ENCODE measurements at regions of chr12 and their contacts with region 1.

Region 1: GRCh38 chr12:6039894-6040568 is 84.4 kb downstream of the VWF start:
- DNase-seq: peak in 1 of 2 experiments; percentile 69
- H3K4me3 ChIP-seq: no peak overlapping the region
- H3K27ac ChIP-seq: no peak overlapping the region
- H3K4me1 ChIP-seq: peaks cover 0 to 4% (median 2%) of the 10 kb centered on the region in 4 experiments; a peak in 4 of 7 replicates
- H3K27me3 ChIP-seq: peaks cover 0 to 2% (median 0%) of the 10 kb centered on the region in 4 experiments; a peak in 2 of 7 replicates
- CTCF ChIP-seq: peak; percentile 72 to 94 (median 85)
- EP300 ChIP-seq: no peak
- POLR2A ChIP-seq: no peak
- RAD21 ChIP-seq: peak; percentile 97 to 98

Region 2: GRCh38 chr12:5898876-5899275 is 141.2 kb before region 1 on chr12:
- CTCF ChIA-PET with region 1: interaction called, 13 read pairs
- POLR2A ChIA-PET with region 1: no interaction called
- DNase-seq: peak in 1 of 2 experiments; percentile 10
- H3K4me3 ChIP-seq: no peak overlapping the region
- H3K27ac ChIP-seq: no peak overlapping the region
- H3K4me1 ChIP-seq: no peaks in the 10 kb centered on the region
- H3K27me3 ChIP-seq: no peaks in the 10 kb centered on the region
- CTCF ChIP-seq: peak; percentile 60 to 73 (median 65)
- EP300 ChIP-seq: no peak
- POLR2A ChIP-seq: no peak
- RAD21 ChIP-seq: peak; percentile 59 to 76

Region 3: DNA sequence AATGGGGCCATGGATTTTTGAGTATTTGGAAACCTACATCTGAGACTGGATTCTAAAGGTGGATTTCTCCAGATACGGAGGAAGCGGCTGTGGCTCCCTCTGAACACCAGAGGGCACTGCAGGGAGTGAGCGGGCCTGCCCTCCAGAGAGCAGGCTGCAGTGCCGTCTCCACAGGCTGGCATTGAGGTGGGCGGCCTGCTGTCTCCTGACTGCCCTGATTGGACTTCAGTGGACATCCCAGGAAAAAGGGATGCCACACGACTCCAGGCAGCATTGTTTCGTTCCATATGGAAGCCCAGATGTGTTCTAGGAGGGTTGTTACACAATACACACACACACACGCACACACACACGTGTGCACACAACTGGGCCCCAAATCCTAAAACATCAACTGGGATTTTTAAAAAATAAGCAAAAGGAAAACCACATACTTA is 74.1 kb before region 1 on chr12:
- CTCF ChIA-PET with region 1: interaction called, 36 read pairs
- POLR2A ChIA-PET with region 1: no interaction called
- DNase-seq: peak in 1 of 2 experiments; percentile 81
- H3K4me3 ChIP-seq: no peak overlapping the region
- H3K27ac ChIP-seq: no peak overlapping the region
- H3K4me1 ChIP-seq: peaks cover 5 to 14% (median 12%) of the 10 kb centered on the region in 4 experiments; a peak in 6 of 7 replicates
- H3K27me3 ChIP-seq: 0 out of 7 replicates have a peak, but pooled peaks cover 0 to 3% (median 0%) of the 10 kb centered on the region in 4 experiments
- CTCF ChIP-seq: peak; percentile 84 to 90 (median 88)
- EP300 ChIP-seq: no peak
- POLR2A ChIP-seq: no peak
- RAD21 ChIP-seq: peak; percentile 51 to 63

Region 4: DNA sequence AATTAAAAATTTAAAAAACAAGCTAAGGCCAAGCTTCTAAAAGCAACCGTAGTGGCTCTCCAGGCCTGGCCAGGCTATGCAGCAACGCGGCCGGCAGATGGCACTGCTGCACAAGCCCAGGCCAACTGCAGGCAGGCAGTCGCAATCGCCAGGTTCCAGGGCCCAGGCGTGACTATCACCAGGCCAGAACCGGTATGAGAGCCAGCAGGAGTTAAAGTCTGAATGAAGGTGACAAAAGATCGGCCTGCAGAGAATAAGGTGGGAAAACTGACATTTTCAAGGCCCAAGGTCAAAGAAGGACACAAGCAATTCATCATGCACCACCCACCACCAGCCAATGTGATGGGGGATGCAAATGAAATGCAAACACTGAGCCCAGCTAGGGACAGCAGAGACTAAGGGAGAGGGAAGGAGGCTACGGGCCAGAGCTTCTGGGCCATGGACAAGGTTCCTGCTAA is 51.3 kb before region 1 on chr12:
- CTCF ChIA-PET with region 1: interaction called, 412 read pairs
- POLR2A ChIA-PET with region 1: interaction called, 21 read pairs
- DNase-seq: peak; percentile 75 to 86
- H3K4me3 ChIP-seq: no peak overlapping the region
- H3K27ac ChIP-seq: no peak overlapping the region; the same call in 1 of the 2 replicates
- H3K4me1 ChIP-seq: peaks cover 2 to 6% (median 4%) of the 10 kb centered on the region in 4 experiments; a peak in 6 of 7 replicates
- H3K27me3 ChIP-seq: no peaks in the 10 kb centered on the region
- CTCF ChIP-seq: peak; percentile 93 to 99 (median 97)
- EP300 ChIP-seq: peak in 1 of 2 experiments; percentile 57; a peak in 1 of 3 replicates
- POLR2A ChIP-seq: no peak
- RAD21 ChIP-seq: peak; percentile 98 to 99

Region 5: DNA sequence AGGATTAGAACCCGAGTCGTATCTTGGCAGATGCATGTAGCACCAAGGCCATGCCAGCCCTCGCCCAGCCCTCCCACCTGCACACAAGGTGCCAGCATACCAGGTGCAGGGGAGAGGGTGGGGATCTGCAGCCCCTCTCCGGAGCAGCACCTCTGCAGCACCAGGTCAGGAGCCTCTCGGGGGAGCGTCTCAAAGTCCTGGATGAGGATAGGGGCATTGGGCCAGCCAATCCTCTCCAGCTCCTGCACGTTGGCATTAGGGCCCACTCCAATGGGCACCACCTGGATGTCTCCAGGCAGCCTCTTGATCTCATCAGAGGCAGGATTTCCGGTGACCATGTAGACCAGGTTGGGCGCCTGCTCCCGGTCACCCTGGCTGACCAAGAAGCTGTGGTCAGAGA is 21.8 kb before region 1 on chr12:
- CTCF ChIA-PET with region 1: interaction called, 20 read pairs
- POLR2A ChIA-PET with region 1: no interaction called
- DNase-seq: no peak
- H3K4me3 ChIP-seq: no peak overlapping the region
- H3K27ac ChIP-seq: no peak overlapping the region
- H3K4me1 ChIP-seq: no peaks in the 10 kb centered on the region
- H3K27me3 ChIP-seq: no peaks in the 10 kb centered on the region
- CTCF ChIP-seq: no peak
- EP300 ChIP-seq: no peak
- POLR2A ChIP-seq: no peak
- RAD21 ChIP-seq: no peak

Region 6: GRCh38 chr12:6056406-6057240 is 16.6 kb after region 1 on chr12:
- CTCF ChIA-PET with region 1: interaction called, 44 read pairs
- POLR2A ChIA-PET with region 1: interaction called, 3 read pairs
- DNase-seq: peak; percentile 33 to 63
- H3K4me3 ChIP-seq: peak overlapping the region; percentile 38 to 62 (median 40)
- H3K27ac ChIP-seq: no peak overlapping the region
- H3K4me1 ChIP-seq: peaks cover 7 to 18% (median 16%) of the 10 kb centered on the region in 4 experiments
- H3K27me3 ChIP-seq: peaks cover 0 to 16% (median 10%) of the 10 kb centered on the region in 4 experiments; a peak in 5 of 7 replicates
- CTCF ChIP-seq: peak; percentile 58 to 66 (median 60)
- EP300 ChIP-seq: no peak
- POLR2A ChIP-seq: no peak
- RAD21 ChIP-seq: peak; percentile 25 to 56; a peak in 3 of 4 replicates

Region 7: DNA sequence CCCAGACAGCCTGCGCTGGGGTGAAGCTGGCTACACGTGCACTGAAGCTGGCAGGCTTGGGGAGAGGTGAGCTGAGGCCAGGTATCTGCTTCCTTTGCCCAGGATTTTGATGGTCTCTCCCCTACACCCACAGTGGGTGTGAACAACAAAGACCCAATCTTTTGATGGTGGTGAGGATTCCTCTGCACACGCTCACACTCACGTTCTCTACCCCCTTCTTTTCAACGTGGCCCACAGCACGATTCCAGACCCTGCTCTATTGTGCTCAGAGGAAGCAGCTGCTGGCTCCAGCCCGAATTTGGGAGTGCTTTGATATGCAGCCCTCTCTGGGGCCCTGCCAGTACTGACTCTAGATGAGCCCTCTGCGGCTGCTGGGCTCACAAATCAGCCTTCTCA is 165.1 kb after region 1 on chr12:
- CTCF ChIA-PET with region 1: no interaction called
- POLR2A ChIA-PET with region 1: no interaction called
- DNase-seq: peak in 1 of 2 experiments; percentile 65
- H3K4me3 ChIP-seq: no peak overlapping the region
- H3K27ac ChIP-seq: peak overlapping the region; percentile 86
- H3K4me1 ChIP-seq: peaks cover 22 to 49% (median 33%) of the 10 kb centered on the region in 4 experiments
- H3K27me3 ChIP-seq: no peaks in the 10 kb centered on the region; a peak in 1 of 7 replicates
- CTCF ChIP-seq: peak in 1 of 3 experiments; percentile 25; a peak in 1 of 4 replicates
- EP300 ChIP-seq: no peak
- POLR2A ChIP-seq: peak in 1 of 2 experiments; percentile 36; a peak in 1 of 3 replicates
- RAD21 ChIP-seq: peak; percentile 24 to 43; a peak in 3 of 4 replicates

Region 8: DNA sequence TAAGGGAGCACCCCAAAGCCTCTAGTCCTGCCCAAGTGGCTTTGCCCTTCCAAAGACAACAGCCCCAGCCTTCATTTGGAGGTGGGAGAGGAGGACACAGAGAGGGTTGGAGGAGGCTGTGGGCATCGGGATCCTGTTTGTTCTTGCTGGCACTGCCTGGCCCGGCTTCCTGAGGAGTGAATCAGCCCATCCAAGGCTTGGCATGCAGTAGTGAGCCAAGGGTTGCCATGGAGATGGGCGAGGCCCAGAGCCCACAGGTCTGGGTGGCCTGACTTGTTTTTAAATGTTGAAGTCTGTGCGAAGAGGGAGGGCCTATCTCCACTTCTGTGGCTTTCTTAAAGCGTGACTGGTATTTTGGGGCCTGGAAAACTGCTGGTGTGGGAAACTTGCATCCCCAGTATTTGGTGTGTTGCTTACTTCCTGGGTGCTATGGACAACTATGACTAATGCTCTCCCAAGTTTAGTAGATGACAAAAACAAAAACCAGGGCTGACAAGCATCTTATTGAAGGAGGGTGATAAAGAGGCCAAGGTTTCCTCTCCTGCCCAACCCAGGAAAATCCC is 176.0 kb after region 1 on chr12:
- CTCF ChIA-PET with region 1: no interaction called
- POLR2A ChIA-PET with region 1: no interaction called
- DNase-seq: no peak
- H3K4me3 ChIP-seq: peak overlapping the region in 1 of 4 experiments; percentile 23; a peak in 1 of 8 replicates
- H3K27ac ChIP-seq: peak overlapping the region; percentile 79
- H3K4me1 ChIP-seq: peaks cover 28 to 50% (median 43%) of the 10 kb centered on the region in 4 experiments
- H3K27me3 ChIP-seq: no peaks in the 10 kb centered on the region; a peak in 1 of 7 replicates
- CTCF ChIP-seq: no peak
- EP300 ChIP-seq: no peak
- POLR2A ChIP-seq: no peak
- RAD21 ChIP-seq: no peak

Region 9: DNA sequence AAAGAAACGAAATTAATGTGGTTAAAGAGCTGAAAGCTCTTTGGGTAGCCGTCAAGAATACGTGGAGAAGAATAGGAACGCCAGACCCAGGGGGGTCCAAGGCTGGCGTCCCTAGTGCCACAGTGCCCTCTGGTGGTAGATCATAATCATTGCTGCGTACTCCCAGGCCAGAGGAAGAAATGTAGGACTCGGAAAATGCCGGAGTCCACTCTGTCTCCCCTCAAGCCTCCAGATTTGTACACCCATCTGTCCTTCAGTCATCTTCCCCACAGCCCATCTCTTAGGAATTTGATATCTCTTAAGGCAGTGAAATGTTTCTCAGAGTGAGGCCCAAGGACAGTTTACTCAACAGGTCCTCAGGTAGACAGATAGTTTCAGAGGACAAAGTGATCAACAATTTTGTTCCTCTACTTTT is 245.0 kb after region 1 on chr12:
- CTCF ChIA-PET with region 1: interaction called, 23 read pairs
- POLR2A ChIA-PET with region 1: no interaction called
- DNase-seq: peak in 1 of 2 experiments; percentile 85
- H3K4me3 ChIP-seq: no peak overlapping the region
- H3K27ac ChIP-seq: no peak overlapping the region
- H3K4me1 ChIP-seq: peaks cover 0 to 5% (median 3%) of the 10 kb centered on the region in 4 experiments; a peak in 3 of 7 replicates
- H3K27me3 ChIP-seq: peaks cover 0 to 2% (median 0%) of the 10 kb centered on the region in 4 experiments; a peak in 2 of 7 replicates
- CTCF ChIP-seq: peak; percentile 83 to 92 (median 91)
- EP300 ChIP-seq: no peak
- POLR2A ChIP-seq: no peak
- RAD21 ChIP-seq: peak; percentile 98 to 99

Measured in H1 (cell line).